ENCODE measurements at regions of chr20 and their contacts with region 1.

Region 1: DNA sequence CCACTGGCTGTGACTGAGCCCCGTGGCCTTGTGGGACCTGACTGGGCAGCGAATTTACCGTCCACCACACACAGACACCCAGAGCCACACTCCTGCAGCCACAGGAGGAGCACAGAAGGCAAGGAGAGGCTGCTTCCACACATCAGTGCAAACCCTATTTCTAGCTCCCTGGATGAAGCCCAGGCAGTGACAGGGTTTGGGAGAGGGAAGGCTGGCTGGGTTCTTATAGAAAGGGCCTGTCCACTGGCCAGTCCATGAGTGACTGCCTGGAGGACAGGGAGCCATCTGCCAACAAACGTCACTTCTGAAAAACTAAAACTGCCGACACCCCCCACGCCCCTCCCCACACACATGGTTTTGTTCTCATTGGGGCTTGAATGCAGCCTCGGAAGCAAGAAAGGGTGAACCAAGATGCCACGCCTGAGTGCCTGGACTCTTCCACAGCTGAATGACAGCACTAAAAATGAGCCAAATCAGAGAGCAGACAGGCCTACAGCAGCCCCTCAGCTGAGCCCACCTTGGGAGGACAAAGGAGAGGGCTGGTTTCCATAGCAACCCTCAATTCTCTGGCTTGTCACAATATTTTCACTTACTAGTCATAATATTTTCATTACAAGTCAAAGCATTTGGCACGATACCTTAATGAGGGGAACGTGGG is 38.4 kb downstream of the RRBP1 start:
- DNase-seq: no peak
- H3K4me3 ChIP-seq: no peak overlapping the region
- CTCF ChIP-seq: no peak

Region 2: DNA sequence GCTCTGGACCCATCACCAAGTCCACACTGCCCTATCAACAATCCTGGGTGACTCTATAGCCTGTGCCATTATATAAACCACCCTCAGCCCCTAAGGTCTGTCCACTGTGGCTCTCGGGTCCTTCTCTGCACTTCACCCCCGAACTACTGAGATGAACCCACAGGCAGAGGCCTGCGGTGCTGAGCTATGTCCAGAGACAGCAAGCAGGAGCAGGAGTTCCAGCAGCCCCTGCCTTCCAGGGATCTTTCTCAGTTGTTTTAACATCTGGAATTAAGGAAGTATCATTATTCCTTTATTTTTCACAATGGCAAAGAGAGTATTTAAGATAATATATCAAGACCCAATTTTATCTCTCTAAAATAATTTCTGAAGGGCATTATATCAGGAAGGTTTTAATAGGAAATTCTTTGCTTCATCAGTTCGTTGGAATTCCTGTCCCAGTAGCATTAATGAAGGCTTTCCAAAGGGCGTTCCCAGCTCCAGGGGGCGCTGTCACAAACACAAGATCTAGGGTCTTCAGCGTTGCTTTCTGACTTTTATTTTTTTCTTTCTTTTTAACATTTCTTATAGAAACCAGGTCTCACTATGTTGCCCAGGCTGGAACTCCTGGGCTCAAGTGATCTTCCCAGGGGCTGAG is 11.1 kb after region 1 on chr20:
- CTCF ChIA-PET with region 1: interaction called, 20 read pairs
- POLR2A ChIA-PET with region 1: no interaction called
- DNase-seq: no peak
- H3K4me3 ChIP-seq: no peak overlapping the region
- CTCF ChIP-seq: peak; percentile 51

Region 3: DNA sequence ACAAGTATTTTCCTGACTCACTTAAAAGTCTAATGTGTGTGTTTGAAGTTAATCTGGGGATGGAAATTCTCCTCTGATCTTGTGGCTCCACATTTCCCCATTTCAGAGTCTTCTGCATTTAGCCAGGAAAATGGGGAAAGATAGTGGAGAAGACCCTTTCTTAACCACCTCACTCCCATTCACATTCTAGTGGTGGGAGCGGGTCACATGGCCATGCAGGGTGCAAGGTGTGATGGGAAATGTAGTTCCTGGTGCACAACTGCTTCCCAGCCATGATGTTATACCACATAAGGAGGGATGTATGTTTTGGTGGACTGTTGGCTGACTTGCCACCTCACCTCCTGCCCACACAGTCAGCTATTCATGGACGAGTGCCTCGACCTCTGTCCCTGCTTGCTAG is 117.9 kb after region 1 on chr20:
- CTCF ChIA-PET with region 1: no interaction called
- POLR2A ChIA-PET with region 1: no interaction called
- DNase-seq: no peak
- H3K4me3 ChIP-seq: no peak overlapping the region
- CTCF ChIP-seq: no peak

Region 4: DNA sequence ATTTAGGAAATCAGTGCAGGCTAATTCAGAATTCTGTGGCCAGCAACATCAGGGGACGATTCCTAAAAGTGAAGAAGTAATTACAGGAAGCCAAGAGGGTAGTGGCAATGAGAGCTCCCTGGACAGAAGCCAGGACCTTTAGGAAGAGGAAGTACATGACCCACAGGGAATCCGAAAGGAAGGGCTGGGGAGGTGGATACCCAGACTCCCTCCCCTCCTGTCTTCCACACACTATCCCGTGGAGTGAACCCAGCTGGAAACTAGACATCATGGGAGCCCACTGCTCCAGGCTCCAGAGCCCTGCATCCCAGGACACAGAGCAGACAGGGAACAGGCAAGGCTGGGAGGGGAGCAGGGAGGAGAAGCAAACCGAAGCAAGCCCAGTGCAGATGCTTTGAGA is 241.9 kb after region 1 on chr20:
- CTCF ChIA-PET with region 1: no interaction called
- POLR2A ChIA-PET with region 1: no interaction called
- DNase-seq: no peak
- H3K4me3 ChIP-seq: no peak overlapping the region
- CTCF ChIP-seq: no peak

Measured in AG04449 (cell line).